ENCODE measurements at regions of chr5 and their contacts with region 1.

Region 1: GRCh38 chr5:154840435-154841272 is 9.7 kb downstream of the FAXDC2 start:
- DNase-seq: no peak
- H3K4me3 ChIP-seq: no peak overlapping the region
- H3K27ac ChIP-seq: no peak overlapping the region
- H3K4me1 ChIP-seq: no peaks in the 10 kb centered on the region
- H3K27me3 ChIP-seq: no peaks in the 10 kb centered on the region
- CTCF ChIP-seq: no peak

Region 2: GRCh38 chr5:154794525-154795234 is 46.0 kb before region 1 on chr5:
- CTCF ChIA-PET with region 1: no interaction called
- POLR2A ChIA-PET with region 1: no interaction called
- intact Hi-C with region 1: no loop called
- DNase-seq: no peak
- H3K4me3 ChIP-seq: no peak overlapping the region
- H3K27ac ChIP-seq: peak overlapping the region; percentile 14; the same call in 1 of the 2 replicates
- H3K4me1 ChIP-seq: no peaks in the 10 kb centered on the region
- H3K27me3 ChIP-seq: no peaks in the 10 kb centered on the region
- CTCF ChIP-seq: no peak

Region 3: GRCh38 chr5:154829589-154830218 is 10.9 kb before region 1 on chr5:
- CTCF ChIA-PET with region 1: no interaction called
- POLR2A ChIA-PET with region 1: interaction called, 15 read pairs
- intact Hi-C with region 1: no loop called
- DNase-seq: peak; percentile 76 to 88
- H3K4me3 ChIP-seq: no peak overlapping the region
- H3K27ac ChIP-seq: peak overlapping the region; percentile 74
- H3K4me1 ChIP-seq: peaks cover 47% of the 10 kb centered on the region
- H3K27me3 ChIP-seq: no peaks in the 10 kb centered on the region
- CTCF ChIP-seq: no peak

Region 4: GRCh38 chr5:154857530-154858296 is 17.1 kb after region 1 on chr5:
- CTCF ChIA-PET with region 1: no interaction called
- POLR2A ChIA-PET with region 1: interaction called, 4 read pairs
- intact Hi-C with region 1: loop called (anchors 1 kb)
- DNase-seq: peak; percentile 88 to 94
- H3K4me3 ChIP-seq: peak overlapping the region; percentile 88
- H3K27ac ChIP-seq: peak overlapping the region; percentile 84
- H3K4me1 ChIP-seq: peaks cover 24% of the 10 kb centered on the region
- H3K27me3 ChIP-seq: no peaks in the 10 kb centered on the region
- CTCF ChIP-seq: no peak

Region 5: DNA sequence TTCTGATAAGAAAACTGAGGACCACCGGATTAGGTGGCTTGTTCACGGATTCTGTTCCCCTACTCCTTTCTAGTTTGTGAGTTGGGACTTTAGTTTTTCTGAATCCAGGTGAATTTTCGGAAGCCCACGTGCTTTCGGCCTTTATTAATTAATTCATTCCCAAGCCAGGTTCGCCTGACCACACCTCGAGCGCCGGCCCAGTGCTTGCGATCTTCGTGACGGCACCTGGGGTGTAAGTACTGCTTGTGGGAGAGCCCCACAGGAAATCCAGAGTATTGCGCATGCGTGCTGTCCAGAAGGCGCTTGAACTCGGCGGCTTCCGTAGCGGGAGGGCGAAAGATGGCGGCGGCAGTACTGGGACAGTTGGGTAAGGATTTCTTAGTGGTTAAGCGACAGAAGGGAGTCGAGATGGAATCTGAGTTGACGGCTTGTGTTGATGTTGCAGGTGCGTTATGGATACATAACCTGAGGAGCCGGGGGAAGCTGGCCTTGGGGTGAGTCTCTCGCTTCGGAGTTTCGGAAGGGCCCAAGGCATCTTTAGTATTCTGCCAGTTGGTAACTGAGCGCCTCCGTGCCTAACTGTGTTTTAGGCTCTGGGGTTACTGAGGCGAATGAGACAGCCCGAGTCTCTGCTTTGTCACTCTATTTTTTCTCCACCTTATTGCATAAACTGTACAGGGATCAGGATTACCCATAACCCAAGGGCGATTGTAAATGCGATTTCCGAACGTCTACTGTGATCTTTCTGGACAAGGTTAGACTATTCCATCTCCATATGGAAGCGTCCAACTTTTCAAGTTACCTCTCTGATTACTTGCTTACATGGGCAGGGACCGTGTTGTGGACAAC is 100.3 kb after region 1 on chr5 and contains the start of gene MRPL22:
- CTCF ChIA-PET with region 1: no interaction called
- POLR2A ChIA-PET with region 1: interaction called, 19 read pairs
- intact Hi-C with region 1: no loop called
- DNase-seq: peak; percentile 86 to 92
- H3K4me3 ChIP-seq: peak within 1 kb of the TSS; percentile 81
- H3K27ac ChIP-seq: peak within 1 kb of the TSS; percentile 35
- H3K4me1 ChIP-seq: peaks cover 26% of the 10 kb centered on the region; the same call in 1 of the 2 replicates
- H3K27me3 ChIP-seq: no peaks in the 10 kb centered on the region
- CTCF ChIP-seq: no peak
- total RNA-seq, gene MRPL22: 80.8 and 94.0 TPM in 2 replicates